ENCODE measurements at regions of chr14 and their contacts with region 1.

Region 1: GRCh38 chr14:22986508-22987054 is 4.2 kb upstream of the AJUBA start:
- DNase-seq: peak; percentile 80 to 86 (median 81)
- H3K4me3 ChIP-seq: no peak overlapping the region
- H3K4me3 Mint-ChIP-seq: no peak overlapping the region
- H3K27ac ChIP-seq: no peak overlapping the region
- H3K27ac Mint-ChIP-seq: peak overlapping the region in 1 of 7 donors; percentile 41
- H3K4me1 ChIP-seq: peaks cover 8% of the 10 kb centered on the region
- H3K4me1 Mint-ChIP-seq: peaks cover 0 to 4% (median 0%) of the 10 kb centered on the region in 4 donors
- H3K27me3 ChIP-seq: no peaks in the 10 kb centered on the region
- H3K27me3 Mint-ChIP-seq: no peaks in the 10 kb centered on the region

Region 2: DNA sequence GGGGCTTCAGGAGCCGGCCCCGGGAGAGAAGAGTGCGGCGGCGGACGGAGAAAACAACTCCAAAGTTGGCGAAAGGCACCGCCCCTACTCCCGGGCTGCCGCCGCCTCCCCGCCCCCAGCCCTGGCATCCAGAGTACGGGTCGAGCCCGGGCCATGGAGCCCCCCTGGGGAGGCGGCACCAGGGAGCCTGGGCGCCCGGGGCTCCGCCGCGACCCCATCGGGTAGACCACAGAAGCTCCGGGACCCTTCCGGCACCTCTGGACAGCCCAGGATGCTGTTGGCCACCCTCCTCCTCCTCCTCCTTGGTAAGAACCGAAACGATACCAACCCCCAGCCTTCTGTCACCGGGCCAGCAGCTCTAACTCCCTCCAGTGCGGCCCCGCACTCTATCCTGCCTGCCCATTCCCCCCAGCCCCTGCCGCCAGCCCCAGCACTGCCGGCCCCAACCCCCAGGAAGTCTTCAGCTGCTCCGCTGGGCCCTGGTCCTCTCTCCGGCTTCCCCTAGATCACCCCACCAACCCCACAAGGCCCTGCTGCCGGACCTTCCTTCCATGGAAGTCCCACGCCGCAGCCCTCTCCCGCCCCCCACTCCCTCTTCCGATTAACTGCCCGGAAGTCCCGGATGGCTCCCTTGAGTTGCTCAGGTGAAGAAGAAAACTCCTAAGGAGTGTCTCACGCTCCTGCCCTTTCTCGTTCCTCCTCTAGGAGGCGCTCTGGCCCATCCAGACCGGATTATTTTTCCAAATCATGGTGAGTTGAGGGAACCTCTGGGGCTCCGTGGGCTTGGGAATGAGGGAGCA is 114.3 kb before region 1 on chr14:
- CTCF ChIA-PET with region 1: interaction called, 3 read pairs
- POLR2A ChIA-PET with region 1: interaction called, 4 read pairs
- intact Hi-C with region 1: loop called (anchors 5 kb)
- DNase-seq: peak; percentile 66 to 78 (median 73)
- H3K4me3 ChIP-seq: peak overlapping the region; percentile 24 to 55
- H3K4me3 Mint-ChIP-seq: peak overlapping the region; percentile 88 to 98 (median 97)
- H3K27ac ChIP-seq: peak overlapping the region; percentile 79
- H3K27ac Mint-ChIP-seq: peak overlapping the region; percentile 72 to 100 (median 89)
- H3K4me1 ChIP-seq: peaks cover 48% of the 10 kb centered on the region
- H3K4me1 Mint-ChIP-seq: peaks cover 17 to 46% (median 33%) of the 10 kb centered on the region in 4 donors
- H3K27me3 ChIP-seq: no peaks in the 10 kb centered on the region
- H3K27me3 Mint-ChIP-seq: no peaks in the 10 kb centered on the region

Region 3: DNA sequence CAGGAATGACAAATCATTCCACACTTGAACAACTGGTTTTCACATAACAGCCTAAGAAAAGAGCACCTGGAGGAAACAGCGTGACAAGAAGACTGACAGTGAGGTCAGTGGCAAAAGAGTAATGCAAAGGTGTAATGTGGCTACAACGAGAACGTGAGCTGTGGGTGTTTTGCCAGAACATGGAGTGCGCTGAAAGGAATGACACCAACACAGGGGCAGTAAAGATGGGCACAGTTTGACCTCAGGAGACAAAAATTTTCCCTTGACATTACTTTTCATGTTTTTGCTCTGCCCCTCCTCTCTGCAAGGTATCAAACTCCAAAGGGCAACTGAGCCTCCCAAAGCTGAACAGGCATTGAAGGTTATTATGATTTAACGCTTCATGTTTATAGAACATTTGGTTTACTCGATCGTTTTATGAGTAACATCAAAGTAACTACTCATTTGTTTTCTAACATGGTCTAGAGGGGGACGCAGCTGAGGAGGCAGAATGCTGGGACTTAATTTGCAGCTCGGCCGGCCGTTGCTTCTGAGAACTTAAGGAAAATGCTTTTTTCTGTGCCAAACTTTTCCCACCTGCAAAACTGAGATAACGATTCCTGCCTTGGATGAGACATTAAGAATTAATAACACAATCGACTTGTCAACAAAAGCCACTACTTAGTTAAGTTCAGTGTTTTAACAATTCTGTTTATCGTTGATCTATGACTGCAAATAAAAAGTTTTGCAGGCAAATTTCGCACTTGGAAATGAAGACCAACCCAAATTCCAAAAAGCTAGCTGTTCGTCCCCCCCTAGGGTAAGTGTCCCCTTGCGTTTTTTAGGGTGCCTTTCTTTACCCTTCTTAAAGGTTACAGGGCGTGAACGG is 30.6 kb before region 1 on chr14:
- CTCF ChIA-PET with region 1: interaction called, 395 read pairs
- POLR2A ChIA-PET with region 1: interaction called, 10 read pairs
- intact Hi-C with region 1: no loop called
- DNase-seq: peak in 1 of 5 donors; percentile 11
- H3K4me3 ChIP-seq: peak overlapping the region; percentile 30 to 89
- H3K4me3 Mint-ChIP-seq: peak overlapping the region; percentile 91 to 94 (median 92)
- H3K27ac ChIP-seq: peak overlapping the region; percentile 79
- H3K27ac Mint-ChIP-seq: peak overlapping the region; percentile 92 to 95 (median 93)
- H3K4me1 ChIP-seq: peaks cover 16% of the 10 kb centered on the region
- H3K4me1 Mint-ChIP-seq: peaks cover 13 to 22% (median 16%) of the 10 kb centered on the region in 4 donors
- H3K27me3 ChIP-seq: no peaks in the 10 kb centered on the region
- H3K27me3 Mint-ChIP-seq: no peaks in the 10 kb centered on the region

Region 4: DNA sequence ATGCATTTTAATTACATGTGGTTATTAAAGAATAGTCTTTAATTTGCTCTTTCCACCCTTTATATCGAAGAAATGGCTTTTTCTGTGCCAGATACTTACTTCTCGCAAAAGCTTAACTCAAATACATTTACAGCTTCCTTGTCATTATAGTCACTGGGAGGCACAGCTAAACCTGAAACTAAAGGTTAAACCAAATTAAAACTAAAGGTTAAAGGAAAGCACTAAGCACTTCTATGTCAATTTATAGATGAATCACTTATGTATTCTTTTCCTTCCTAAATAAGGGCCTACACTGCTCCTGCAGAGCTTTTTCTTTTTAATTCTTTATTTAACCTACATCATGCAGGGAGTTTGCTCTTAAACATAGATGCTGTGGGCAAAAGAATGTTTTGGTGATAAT is 14.3 kb after region 1 on chr14:
- CTCF ChIA-PET with region 1: interaction called, 59 read pairs
- POLR2A ChIA-PET with region 1: interaction called, 30 read pairs
- intact Hi-C with region 1: no loop called
- DNase-seq: no peak
- H3K4me3 ChIP-seq: no peak overlapping the region
- H3K4me3 Mint-ChIP-seq: no peak overlapping the region
- H3K27ac ChIP-seq: no peak overlapping the region
- H3K27ac Mint-ChIP-seq: no peak overlapping the region
- H3K4me1 ChIP-seq: peaks cover 2% of the 10 kb centered on the region
- H3K4me1 Mint-ChIP-seq: peaks cover 0 to 6% (median 3%) of the 10 kb centered on the region in 4 donors
- H3K27me3 ChIP-seq: no peaks in the 10 kb centered on the region
- H3K27me3 Mint-ChIP-seq: no peaks in the 10 kb centered on the region

Region 5: DNA sequence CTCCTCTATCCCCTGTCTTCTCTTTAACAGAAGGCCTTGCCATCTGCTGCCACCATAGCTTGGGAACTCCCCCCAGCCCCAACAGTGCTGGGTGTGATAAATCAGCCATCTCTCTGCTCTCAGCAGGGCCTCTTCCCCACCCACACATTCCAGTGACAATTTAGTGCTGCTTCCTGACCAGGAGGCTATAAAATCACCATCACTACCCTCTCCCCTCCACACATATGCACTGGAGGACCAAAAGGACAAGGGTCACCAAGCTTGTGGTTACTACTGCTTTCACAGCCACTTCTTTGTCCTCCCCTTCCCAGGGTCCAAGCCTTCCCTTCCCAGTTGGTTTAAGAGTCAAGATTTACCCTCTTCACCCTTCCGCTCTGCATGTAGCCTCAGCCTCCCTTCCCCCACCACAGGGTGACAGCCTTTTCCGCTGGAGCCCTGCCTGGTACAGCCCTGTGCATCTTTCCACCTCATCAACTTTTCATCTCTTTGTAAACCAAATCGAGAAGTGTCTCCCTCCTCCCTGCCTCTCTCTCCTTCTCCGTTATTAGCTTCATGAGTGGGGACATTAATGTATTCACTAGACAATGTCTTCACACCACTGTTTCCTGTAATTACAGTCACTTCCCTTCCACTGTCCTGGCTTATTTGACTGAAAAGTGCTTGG is 38.7 kb after region 1 on chr14:
- CTCF ChIA-PET with region 1: interaction called, 17 read pairs
- POLR2A ChIA-PET with region 1: interaction called, 3 read pairs
- intact Hi-C with region 1: no loop called
- DNase-seq: no peak
- H3K4me3 ChIP-seq: no peak overlapping the region
- H3K4me3 Mint-ChIP-seq: peak overlapping the region in 3 of 8 donors; percentile 49 to 62 (median 60)
- H3K27ac ChIP-seq: no peak overlapping the region
- H3K27ac Mint-ChIP-seq: peak overlapping the region in 5 of 7 donors; percentile 19 to 68 (median 61)
- H3K4me1 ChIP-seq: peaks cover 46% of the 10 kb centered on the region
- H3K4me1 Mint-ChIP-seq: peaks cover 32 to 53% (median 41%) of the 10 kb centered on the region in 4 donors
- H3K27me3 ChIP-seq: no peaks in the 10 kb centered on the region
- H3K27me3 Mint-ChIP-seq: no peaks in the 10 kb centered on the region

Region 6: DNA sequence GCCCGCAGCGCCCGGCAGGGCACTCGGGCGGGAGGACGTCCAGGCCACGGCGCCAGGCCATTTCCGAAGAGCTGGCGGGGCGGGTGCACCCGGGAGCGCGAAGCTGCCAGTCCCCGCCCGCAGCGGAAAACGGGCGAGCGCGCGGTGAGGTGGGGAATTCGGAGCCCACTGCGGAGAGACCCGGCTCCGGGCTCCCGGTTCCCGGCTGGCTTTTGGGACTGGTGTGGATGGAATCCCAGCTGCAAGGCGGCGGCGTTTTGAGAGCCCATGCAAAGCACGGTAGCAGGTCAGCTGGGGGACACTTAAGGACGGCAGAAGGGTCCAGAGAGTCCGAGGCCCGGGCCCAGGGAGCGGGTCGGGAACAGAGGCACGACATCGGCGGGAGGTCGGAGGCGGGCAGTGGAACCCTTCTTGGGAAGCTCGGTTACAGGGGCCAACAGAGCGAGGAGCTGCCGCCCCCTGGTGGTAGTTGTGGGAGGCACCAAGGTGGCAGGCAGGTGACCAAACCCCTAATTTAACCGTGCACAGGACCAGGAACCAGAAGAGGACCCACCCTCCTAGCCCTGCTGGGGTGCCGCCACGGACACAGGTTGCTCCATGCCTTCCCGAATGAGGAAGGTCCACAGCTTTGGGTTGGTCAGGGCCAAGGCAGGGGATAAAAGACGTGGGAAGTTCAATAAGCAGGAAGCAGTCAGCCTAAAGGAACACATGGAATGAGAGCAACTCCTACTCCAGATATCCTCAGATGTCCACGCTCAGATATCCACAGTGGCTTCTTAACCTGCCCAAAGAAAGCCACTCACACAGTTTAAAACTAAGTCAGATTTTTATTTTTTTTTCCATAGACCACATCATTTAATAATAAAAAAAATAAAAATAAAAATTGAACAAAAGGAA is 71.4 kb after region 1 on chr14:
- CTCF ChIA-PET with region 1: interaction called, 1,070 read pairs
- POLR2A ChIA-PET with region 1: interaction called, 82 read pairs
- intact Hi-C with region 1: loop called (anchors 1 kb)
- DNase-seq: peak; percentile 80 to 84 (median 82)
- H3K4me3 ChIP-seq: peak overlapping the region; percentile 36 to 89
- H3K4me3 Mint-ChIP-seq: peak overlapping the region; percentile 84 to 91 (median 88)
- H3K27ac ChIP-seq: peak overlapping the region; percentile 36
- H3K27ac Mint-ChIP-seq: peak overlapping the region in 6 of 7 donors; percentile 60 to 83 (median 82)
- H3K4me1 ChIP-seq: peaks cover 17% of the 10 kb centered on the region
- H3K4me1 Mint-ChIP-seq: peaks cover 11 to 21% (median 15%) of the 10 kb centered on the region in 4 donors
- H3K27me3 ChIP-seq: no peaks in the 10 kb centered on the region
- H3K27me3 Mint-ChIP-seq: peaks cover 0 to 1% of the 10 kb centered on the region in 2 donors

Region 7: DNA sequence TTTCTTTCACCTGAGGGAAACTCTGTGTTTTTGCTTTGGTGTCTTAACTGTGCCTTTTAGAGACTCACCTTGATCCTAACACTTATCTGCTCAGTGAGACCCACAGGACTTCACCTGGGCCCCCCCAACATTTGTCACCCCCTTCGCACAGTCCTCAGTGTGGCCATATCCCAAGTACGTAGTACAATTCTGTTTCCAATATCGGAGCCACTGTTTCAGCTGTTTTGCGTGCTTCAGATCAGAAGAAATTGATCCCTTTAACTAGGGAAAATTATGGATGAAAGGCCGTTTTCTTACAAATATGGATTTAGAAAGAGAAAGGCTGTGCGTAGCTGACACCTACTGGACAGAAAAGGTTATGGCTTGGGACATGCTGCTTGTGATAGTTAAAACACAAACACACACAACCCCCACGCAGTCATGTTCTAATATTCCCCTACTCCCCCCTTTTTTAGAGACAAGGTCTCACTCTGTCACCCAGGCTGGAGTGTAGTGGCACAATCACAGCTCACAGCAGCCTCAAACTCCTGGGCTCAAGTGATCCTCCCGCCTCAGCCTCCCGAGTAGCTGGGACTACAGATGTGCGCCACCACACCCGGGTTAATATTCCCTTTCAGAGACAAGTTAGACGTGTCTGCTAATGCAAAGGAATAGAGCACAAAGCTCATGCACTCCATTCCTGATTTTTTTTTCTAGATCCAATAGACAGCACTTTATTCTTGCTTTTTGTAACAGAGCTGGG is 200.5 kb after region 1 on chr14:
- CTCF ChIA-PET with region 1: interaction called, 8 read pairs
- POLR2A ChIA-PET with region 1: no interaction called
- intact Hi-C with region 1: loop called (anchors 2 kb)
- DNase-seq: peak in 3 of 5 donors; percentile 22 to 33 (median 29)
- H3K4me3 ChIP-seq: no peak overlapping the region
- H3K4me3 Mint-ChIP-seq: no peak overlapping the region
- H3K27ac ChIP-seq: no peak overlapping the region
- H3K27ac Mint-ChIP-seq: no peak overlapping the region
- H3K4me1 ChIP-seq: peaks cover 12% of the 10 kb centered on the region
- H3K4me1 Mint-ChIP-seq: peaks cover 0 to 3% (median 0%) of the 10 kb centered on the region in 4 donors
- H3K27me3 ChIP-seq: peaks cover 8% of the 10 kb centered on the region
- H3K27me3 Mint-ChIP-seq: peaks cover 0 to 7% of the 10 kb centered on the region in 2 donors

Measured in CD4-positive, alpha-beta memory T cell (primary cell).